ENCODE measurements at regions of chr16 and their contacts with region 1.

Region 1: GRCh38 chr16:71344315-71344905 is 14.1 kb upstream of the CALB2 start:
- DNase-seq: no peak
- ATAC-seq: no peak
- H3K4me3 Mint-ChIP-seq: no peak overlapping the region
- H3K27ac Mint-ChIP-seq: no peak overlapping the region
- H3K4me1 Mint-ChIP-seq: no peaks in the 10 kb centered on the region
- H3K27me3 Mint-ChIP-seq: peaks cover 7% of the 10 kb centered on the region
- CTCF ChIP-seq: no peak

Region 2: DNA sequence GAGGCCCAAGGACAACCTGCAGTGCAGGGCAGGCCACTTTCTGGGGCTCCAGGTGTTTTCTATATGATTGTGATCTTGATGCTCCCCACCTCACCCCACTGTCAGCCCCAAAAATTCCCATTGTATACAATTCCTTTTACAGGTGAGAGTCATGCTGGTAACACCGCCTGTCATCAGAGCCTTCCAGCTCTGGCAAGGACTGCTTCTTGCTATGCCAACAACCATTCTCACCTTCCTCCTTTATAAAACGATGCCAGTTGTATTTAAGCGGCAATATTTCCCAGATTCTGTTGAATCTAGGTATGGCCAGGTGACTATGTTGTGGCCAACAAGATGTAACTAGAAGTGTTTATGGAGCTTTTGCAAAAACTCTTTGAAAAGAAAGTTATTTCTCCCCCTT is 16.3 kb before region 1 on chr16:
- CTCF ChIA-PET with region 1: no interaction called
- POLR2A ChIA-PET with region 1: no interaction called
- intact Hi-C with region 1: no loop called
- DNase-seq: no peak
- ATAC-seq: no peak
- H3K4me3 Mint-ChIP-seq: no peak overlapping the region
- H3K27ac Mint-ChIP-seq: no peak overlapping the region
- H3K4me1 Mint-ChIP-seq: no peaks in the 10 kb centered on the region
- H3K27me3 Mint-ChIP-seq: peaks cover 3% of the 10 kb centered on the region
- CTCF ChIP-seq: no peak

Region 3: DNA sequence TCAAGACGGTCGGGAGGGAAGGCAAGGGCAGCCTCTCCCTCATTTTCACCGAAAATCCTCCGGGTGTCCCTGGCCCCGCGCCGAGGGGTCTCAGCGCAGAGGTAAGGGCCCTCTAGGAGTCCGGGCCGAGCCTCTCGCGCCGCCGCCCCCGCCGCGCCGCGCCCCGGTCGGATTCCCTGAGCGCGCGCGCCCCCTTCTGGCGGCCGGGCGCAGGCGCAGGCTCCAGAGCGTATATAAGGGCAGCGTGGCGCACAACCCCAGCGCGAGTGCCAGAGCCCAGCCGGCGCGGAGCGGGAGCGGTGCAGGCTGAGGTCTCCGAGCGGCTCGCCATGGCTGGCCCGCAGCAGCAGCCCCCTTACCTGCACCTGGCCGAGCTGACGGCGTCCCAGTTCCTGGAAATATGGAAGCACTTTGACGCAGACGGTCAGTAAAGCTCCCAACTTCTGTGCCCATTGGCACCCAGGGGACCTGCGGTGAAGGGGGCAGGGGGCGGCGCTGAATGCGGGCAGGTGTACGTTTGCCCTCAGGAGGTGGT is 14.1 kb after region 1 on chr16 and contains the start of gene CALB2:
- CTCF ChIA-PET with region 1: interaction called, 16 read pairs
- POLR2A ChIA-PET with region 1: no interaction called
- intact Hi-C with region 1: no loop called
- DNase-seq: peak; percentile 77
- ATAC-seq: peak; percentile 98
- H3K4me3 Mint-ChIP-seq: no peak within 1 kb of the TSS
- H3K27ac Mint-ChIP-seq: no peak within 1 kb of the TSS
- H3K4me1 Mint-ChIP-seq: peaks cover 2% of the 10 kb centered on the region
- H3K27me3 Mint-ChIP-seq: peaks cover 20% of the 10 kb centered on the region
- CTCF ChIP-seq: peak; percentile 98
- total RNA-seq, gene CALB2: not detected